Esophagus muscularis mucosa (tissue), 4 donors: ENCODE measurements at regions of chr6 and their contacts with region 1.

Region 1: GRCh38 chr6:152863618-152864326 is 113.2 kb downstream of the VIP start:
- DNase-seq: no peak
- H3K4me3 ChIP-seq: no peak overlapping the region
- H3K27ac ChIP-seq: no peak overlapping the region
- H3K4me1 ChIP-seq: no peaks in the 10 kb centered on the region
- H3K27me3 ChIP-seq: peaks cover 0 to 4% (median 0%) of the 10 kb centered on the region in 4 donors
- CTCF ChIP-seq: peak; percentile 56 to 60 (median 57)
- EP300 ChIP-seq: no peak
- POLR2A ChIP-seq: no peak

Region 2: DNA sequence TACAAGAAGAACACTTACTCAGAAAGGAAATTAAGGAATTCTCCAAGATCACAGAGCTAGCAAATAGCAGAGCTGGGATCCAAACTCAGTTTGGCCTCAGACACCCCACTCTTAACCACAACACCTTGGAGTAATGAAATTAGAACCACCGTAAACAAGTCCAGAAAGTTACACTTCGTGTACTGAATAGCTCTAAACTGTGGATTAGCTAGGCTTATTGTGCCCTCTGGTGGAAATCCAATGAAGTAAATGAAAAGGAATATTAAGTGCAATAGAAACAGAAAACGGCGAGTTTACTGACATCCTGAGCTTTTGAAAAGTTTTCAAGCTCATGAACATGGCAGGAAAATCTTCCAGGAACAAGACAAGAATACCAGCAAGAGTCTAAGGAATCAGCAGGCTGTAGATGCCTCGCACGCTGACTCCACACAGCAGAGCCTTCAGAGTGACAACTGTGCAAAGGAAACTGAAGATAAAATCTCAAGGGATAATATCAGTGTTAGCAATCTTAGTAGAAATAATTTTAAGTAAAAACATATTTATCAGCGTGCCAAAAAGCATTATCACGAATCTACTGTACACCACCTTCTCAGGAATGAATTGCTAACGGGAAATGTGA is 84.5 kb after region 1 on chr6:
- intact Hi-C with region 1: loop called (anchors 5 kb)
- DNase-seq: no peak
- H3K4me3 ChIP-seq: peak overlapping the region in 1 of 4 donors; percentile 15
- H3K27ac ChIP-seq: no peak overlapping the region
- H3K4me1 ChIP-seq: peaks cover 5 to 8% (median 6%) of the 10 kb centered on the region in 4 donors
- H3K27me3 ChIP-seq: peaks cover 0 to 5% (median 0%) of the 10 kb centered on the region in 4 donors
- CTCF ChIP-seq: peak; percentile 47 to 61 (median 58)
- EP300 ChIP-seq: no peak
- POLR2A ChIP-seq: no peak

Region 3: DNA sequence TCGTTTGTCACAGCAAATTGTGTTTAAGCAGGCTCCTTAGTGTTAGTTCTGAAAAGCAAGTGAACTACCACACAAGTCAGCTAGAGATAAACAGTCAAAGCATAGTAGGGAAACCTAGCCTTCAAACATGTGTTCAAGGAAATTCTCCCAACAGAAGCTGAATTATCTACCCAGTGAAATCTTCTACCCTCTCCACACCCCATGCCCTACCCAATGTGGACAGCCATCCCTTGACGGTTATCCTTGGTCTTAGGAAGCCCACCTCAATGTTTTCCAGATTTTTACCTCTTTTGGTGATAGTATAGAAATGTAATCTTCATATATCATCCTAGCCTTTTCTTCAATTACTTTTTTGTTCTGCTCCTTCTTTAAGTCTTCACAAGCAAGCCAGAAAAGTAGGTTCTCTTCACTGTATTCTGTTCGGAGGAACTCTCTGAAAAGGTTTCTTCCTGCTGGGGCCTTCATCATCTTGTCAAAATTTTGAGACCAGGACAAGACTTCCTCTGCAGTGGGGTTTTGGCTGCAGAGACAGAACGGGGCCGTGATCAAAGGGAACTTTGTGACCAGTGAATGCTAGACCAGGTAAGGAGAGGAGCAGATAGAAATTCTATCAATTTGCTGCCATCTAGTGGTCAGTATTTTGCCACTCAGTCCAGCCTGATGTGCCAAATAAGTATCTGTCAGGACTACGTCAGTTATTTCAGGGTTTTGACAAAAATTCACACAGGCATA is 160.4 kb after region 1 on chr6:
- intact Hi-C with region 1: loop called (anchors 5 kb)
- DNase-seq: no peak
- H3K4me3 ChIP-seq: no peak overlapping the region
- H3K27ac ChIP-seq: no peak overlapping the region
- H3K4me1 ChIP-seq: no peaks in the 10 kb centered on the region
- H3K27me3 ChIP-seq: no peaks in the 10 kb centered on the region
- CTCF ChIP-seq: peak; percentile 71 to 82 (median 77)
- EP300 ChIP-seq: no peak
- POLR2A ChIP-seq: no peak

Region 4: DNA sequence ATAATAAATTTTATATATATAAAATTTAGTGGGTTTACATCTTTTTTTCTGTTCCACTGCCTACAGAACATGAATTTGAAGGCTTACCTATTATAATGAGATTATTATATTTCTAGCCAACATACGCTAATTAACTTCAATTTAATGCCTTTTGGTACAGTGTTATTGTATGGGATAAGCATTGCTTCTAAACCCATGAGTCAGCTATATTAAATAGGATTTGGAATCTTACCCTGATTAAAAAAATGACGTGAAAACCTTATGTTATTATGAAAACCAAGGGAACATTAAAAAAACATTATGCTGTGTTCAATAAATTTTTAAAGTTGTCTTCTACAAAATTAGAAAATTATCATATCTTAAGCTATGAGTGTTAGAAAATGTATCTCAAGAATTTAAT is 601.3 kb after region 1 on chr6:
- intact Hi-C with region 1: no loop called
- DNase-seq: no peak
- H3K4me3 ChIP-seq: no peak overlapping the region
- H3K27ac ChIP-seq: no peak overlapping the region
- H3K4me1 ChIP-seq: no peaks in the 10 kb centered on the region
- H3K27me3 ChIP-seq: no peaks in the 10 kb centered on the region
- CTCF ChIP-seq: no peak
- EP300 ChIP-seq: no peak
- POLR2A ChIP-seq: no peak